ENCODE measurements at regions of chr11 and their contacts with region 1.

Region 1: DNA sequence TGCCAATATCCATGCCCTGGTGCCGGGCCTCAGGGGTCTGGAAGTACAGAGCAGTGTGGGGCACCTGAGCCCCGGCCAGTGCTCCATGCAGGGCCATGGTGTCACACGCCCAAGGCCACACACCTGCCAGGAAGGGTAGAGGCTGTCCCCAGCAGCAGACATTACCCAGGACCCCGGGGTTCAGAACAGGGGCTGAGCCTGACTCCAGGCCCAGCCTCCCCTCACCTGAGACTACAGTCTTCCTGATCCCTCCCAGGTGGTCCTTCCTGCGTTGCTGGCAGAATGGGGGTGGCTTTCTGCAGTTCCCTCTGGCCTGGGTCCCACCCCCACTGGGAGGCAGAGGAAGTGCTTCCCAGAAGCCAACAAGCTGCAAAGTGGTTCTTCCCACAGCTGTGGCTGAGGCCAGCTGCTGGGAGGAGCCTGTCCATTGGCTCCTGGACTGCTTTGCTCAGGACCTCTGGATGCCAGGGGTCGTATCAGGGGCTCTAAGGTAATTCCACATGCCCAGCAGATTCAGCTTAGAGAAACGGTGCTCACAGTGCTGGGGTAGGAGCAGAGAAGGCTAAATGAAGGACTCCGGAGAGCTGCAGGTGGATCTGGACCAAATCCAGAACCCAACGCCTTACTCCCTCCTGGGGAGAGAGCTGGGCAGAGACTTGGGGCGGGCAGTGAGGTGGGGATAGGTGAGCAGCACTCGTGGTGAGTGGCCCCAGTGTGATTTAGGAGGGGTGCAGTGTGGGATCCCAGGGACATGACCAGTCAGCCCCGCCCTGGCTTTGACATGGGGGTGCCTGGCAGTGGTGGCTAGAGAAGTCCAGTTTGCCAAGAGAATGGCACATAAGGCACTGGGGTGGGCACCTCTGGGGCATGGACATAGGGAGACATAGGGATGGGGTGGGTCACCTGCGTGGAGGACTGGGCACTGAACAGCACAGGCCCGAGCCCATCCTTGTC is 12.6 kb downstream of the TCIRG1 start:
- DNase-seq: no peak
- ATAC-seq: no peak
- H3K4me3 Mint-ChIP-seq: no peak overlapping the region
- H3K27ac Mint-ChIP-seq: peak overlapping the region; percentile 10
- H3K4me1 Mint-ChIP-seq: no peaks in the 10 kb centered on the region
- H3K27me3 Mint-ChIP-seq: no peaks in the 10 kb centered on the region
- CTCF ChIP-seq: no peak

Region 2: GRCh38 chr11:68038718-68039525 is 12.5 kb before region 1 on chr11 and contains the start of gene TCIRG1:
- CTCF ChIA-PET with region 1: no interaction called
- POLR2A ChIA-PET with region 1: interaction called, 45 read pairs
- intact Hi-C with region 1: no loop called
- DNase-seq: peak; percentile 68
- ATAC-seq: peak; percentile 73
- H3K4me3 Mint-ChIP-seq: peak within 1 kb of the TSS; percentile 81
- H3K27ac Mint-ChIP-seq: peak within 1 kb of the TSS; percentile 91
- H3K4me1 Mint-ChIP-seq: peaks cover 13% of the 10 kb centered on the region
- H3K27me3 Mint-ChIP-seq: no peaks in the 10 kb centered on the region
- CTCF ChIP-seq: no peak
- total RNA-seq, gene TCIRG1: 129 to 138 TPM